ENCODE measurements at regions of chr6 and their contacts with region 1.

Region 1: DNA sequence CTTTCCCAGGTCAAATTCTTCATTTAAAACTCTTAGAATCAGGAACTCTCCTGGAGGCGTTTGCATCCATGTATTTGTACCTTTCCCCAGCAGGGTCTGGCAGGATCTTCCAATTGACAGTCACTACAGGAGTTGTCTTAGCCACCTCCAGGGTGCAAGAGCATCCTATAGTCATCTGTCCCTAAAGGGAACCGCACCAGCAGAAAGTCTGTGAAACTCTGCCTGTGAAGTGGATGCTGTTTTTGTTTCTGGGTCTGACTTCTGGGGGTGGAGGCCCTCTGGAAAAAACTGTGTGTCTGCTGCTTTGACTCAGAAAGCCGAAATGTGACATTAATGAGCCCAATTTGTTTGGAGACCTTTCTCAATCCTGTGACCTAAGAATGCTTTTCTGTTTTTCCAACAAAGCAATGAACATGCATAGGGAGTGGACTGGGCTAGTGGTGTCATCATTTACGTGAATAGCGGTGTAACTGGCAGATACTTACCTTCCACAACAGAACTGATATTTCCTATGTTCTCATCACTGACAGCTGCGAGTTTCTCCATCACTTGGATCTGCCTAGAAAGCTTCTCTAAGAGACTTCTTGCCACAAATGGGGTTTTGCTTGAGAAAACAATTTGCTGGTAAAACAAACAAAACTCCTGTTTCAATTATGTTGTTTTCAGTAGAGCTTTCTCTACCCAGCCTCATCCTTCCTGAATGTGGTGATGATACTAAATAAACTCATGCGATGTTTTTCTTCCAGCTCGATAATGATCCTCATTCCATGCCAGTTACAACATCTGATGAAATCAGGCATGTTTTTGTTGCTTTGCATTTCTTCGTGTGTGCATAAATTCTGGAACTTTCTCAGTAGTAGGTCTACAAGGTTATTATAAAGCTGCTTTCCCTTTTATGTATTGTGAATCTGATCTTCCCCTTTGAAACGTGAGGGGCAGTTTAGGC is 33.3 kb upstream of the ARMH2 start:
- DNase-seq: no peak
- H3K4me3 ChIP-seq: no peak overlapping the region
- H3K27ac ChIP-seq: peak overlapping the region in 16 of 59 donors; percentile 2 to 74 (median 32)
- H3K27me3 ChIP-seq: peaks cover 0 to 14% (median 0%) of the 10 kb centered on the region in 45 donors
- CTCF ChIP-seq: no peak

Region 2: GRCh38 chr6:24864343-24864742 is 32.3 kb after region 1 on chr6:
- intact Hi-C with region 1: loop called in 1 of 2 experiments (anchors 2 kb)
- DNase-seq: no peak
- H3K4me3 ChIP-seq: no peak overlapping the region
- H3K27ac ChIP-seq: no peak overlapping the region
- H3K27me3 ChIP-seq: peaks cover 0 to 9% (median 0%) of the 10 kb centered on the region in 45 donors
- CTCF ChIP-seq: no peak

Region 3: GRCh38 chr6:25623879-25624278 is 791.8 kb after region 1 on chr6:
- intact Hi-C with region 1: no loop called
- DNase-seq: no peak
- H3K4me3 ChIP-seq: no peak overlapping the region
- H3K27ac ChIP-seq: no peak overlapping the region
- H3K27me3 ChIP-seq: no peaks in the 10 kb centered on the region
- CTCF ChIP-seq: no peak